WTC11 (cell line): ENCODE measurements at regions of chr15 and their contacts with region 1.

Region 1: GRCh38 chr15:100341662-100342560 is at the start of gene ADAMTS17:
- DNase-seq: peak; percentile 96
- ATAC-seq: peak; percentile 96
- H3K4me3 Mint-ChIP-seq: peak within 1 kb of the TSS; percentile 61
- H3K27ac Mint-ChIP-seq: no peak within 1 kb of the TSS
- H3K4me1 Mint-ChIP-seq: peaks cover 26% of the 10 kb centered on the region
- H3K27me3 Mint-ChIP-seq: peaks cover 63% of the 10 kb centered on the region
- CTCF ChIP-seq: peak; percentile 78
- total RNA-seq, gene ADAMTS17: 1.8 to 2.8 TPM (median 2.2 TPM) in 3 replicates

Region 2: DNA sequence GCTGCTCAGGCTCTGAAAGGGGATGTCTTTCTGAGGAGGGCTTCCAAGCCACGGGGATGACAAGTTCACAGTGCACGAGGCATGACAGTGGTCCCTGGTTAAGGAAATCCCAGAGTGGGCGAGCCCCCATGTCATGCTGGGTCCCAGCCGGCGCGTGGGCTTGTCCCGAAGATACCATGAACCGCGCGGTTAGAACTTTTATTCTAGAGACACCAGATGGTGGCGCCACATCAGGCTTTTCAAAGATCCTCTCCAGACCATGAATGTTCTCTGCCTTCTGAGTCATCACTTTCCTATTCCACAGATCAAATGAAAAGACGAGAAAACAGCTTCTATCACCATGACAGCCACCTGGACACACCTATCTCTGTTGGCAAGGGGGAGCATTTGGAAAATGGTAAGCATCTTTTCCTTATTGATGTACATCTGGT is 380.9 kb before region 1 on chr15:
- CTCF ChIA-PET with region 1: interaction called, 14 read pairs
- POLR2A ChIA-PET with region 1: interaction called, 3 read pairs
- DNase-seq: peak; percentile 56
- ATAC-seq: peak; percentile 75
- H3K4me3 Mint-ChIP-seq: no peak overlapping the region
- H3K27ac Mint-ChIP-seq: no peak overlapping the region
- H3K4me1 Mint-ChIP-seq: peaks cover 3% of the 10 kb centered on the region; the same call in 1 of the 2 replicates
- H3K27me3 Mint-ChIP-seq: peaks cover 12% of the 10 kb centered on the region
- CTCF ChIP-seq: no peak

Region 3: GRCh38 chr15:99994849-99995248 is 347.1 kb before region 1 on chr15:
- CTCF ChIA-PET with region 1: interaction called, 22 read pairs
- POLR2A ChIA-PET with region 1: no interaction called
- DNase-seq: peak; percentile 18
- ATAC-seq: peak; percentile 79
- H3K4me3 Mint-ChIP-seq: no peak overlapping the region; the same call in 1 of the 2 replicates
- H3K27ac Mint-ChIP-seq: peak overlapping the region; percentile 73
- H3K4me1 Mint-ChIP-seq: peaks cover 34% of the 10 kb centered on the region
- H3K27me3 Mint-ChIP-seq: peaks cover 5% of the 10 kb centered on the region; the same call in 1 of the 2 replicates
- CTCF ChIP-seq: no peak

Region 4: GRCh38 chr15:100147828-100148227 is 194.1 kb before region 1 on chr15:
- CTCF ChIA-PET with region 1: no interaction called
- POLR2A ChIA-PET with region 1: no interaction called
- DNase-seq: no peak
- ATAC-seq: no peak
- H3K4me3 Mint-ChIP-seq: no peak overlapping the region
- H3K27ac Mint-ChIP-seq: no peak overlapping the region
- H3K4me1 Mint-ChIP-seq: no peaks in the 10 kb centered on the region
- H3K27me3 Mint-ChIP-seq: peaks cover 2% of the 10 kb centered on the region
- CTCF ChIP-seq: no peak

Region 5: GRCh38 chr15:100330629-100331215 is 11.2 kb before region 1 on chr15:
- CTCF ChIA-PET with region 1: interaction called, 11 read pairs
- POLR2A ChIA-PET with region 1: no interaction called
- DNase-seq: no peak
- ATAC-seq: no peak
- H3K4me3 Mint-ChIP-seq: no peak overlapping the region
- H3K27ac Mint-ChIP-seq: no peak overlapping the region
- H3K4me1 Mint-ChIP-seq: peaks cover 15% of the 10 kb centered on the region
- H3K27me3 Mint-ChIP-seq: no peaks in the 10 kb centered on the region
- CTCF ChIP-seq: no peak